Ascending aorta (tissue), 2 donors: ENCODE measurements at regions of chr10 and their contacts with region 1.

Region 1: GRCh38 chr10:49592726-49593563 is 17.2 kb upstream of the SLC18A3 start:
- DNase-seq: peak in 1 of 2 donors; percentile 63
- H3K4me3 ChIP-seq: no peak overlapping the region
- H3K27ac ChIP-seq: no peak overlapping the region
- H3K4me1 ChIP-seq: no peaks in the 10 kb centered on the region
- H3K27me3 ChIP-seq: no peaks in the 10 kb centered on the region
- CTCF ChIP-seq: peak; percentile 27 to 79 (median 69)

Region 2: GRCh38 chr10:49538381-49539319 is 54.3 kb before region 1 on chr10 and contains the start of gene ERCC6:
- intact Hi-C with region 1: loop called (anchors 5 kb)
- DNase-seq: peak; percentile 92 to 99
- H3K4me3 ChIP-seq: peak within 1 kb of the TSS; percentile 74 to 86
- H3K27ac ChIP-seq: peak within 1 kb of the TSS; percentile 87 to 94
- H3K4me1 ChIP-seq: peaks cover 11 to 35% of the 10 kb centered on the region in 2 donors
- H3K27me3 ChIP-seq: no peaks in the 10 kb centered on the region
- CTCF ChIP-seq: peak in 2 of 3 experiments; percentile 12 to 13
- total RNA-seq, gene ERCC6: 16.2 TPM

Region 3: DNA sequence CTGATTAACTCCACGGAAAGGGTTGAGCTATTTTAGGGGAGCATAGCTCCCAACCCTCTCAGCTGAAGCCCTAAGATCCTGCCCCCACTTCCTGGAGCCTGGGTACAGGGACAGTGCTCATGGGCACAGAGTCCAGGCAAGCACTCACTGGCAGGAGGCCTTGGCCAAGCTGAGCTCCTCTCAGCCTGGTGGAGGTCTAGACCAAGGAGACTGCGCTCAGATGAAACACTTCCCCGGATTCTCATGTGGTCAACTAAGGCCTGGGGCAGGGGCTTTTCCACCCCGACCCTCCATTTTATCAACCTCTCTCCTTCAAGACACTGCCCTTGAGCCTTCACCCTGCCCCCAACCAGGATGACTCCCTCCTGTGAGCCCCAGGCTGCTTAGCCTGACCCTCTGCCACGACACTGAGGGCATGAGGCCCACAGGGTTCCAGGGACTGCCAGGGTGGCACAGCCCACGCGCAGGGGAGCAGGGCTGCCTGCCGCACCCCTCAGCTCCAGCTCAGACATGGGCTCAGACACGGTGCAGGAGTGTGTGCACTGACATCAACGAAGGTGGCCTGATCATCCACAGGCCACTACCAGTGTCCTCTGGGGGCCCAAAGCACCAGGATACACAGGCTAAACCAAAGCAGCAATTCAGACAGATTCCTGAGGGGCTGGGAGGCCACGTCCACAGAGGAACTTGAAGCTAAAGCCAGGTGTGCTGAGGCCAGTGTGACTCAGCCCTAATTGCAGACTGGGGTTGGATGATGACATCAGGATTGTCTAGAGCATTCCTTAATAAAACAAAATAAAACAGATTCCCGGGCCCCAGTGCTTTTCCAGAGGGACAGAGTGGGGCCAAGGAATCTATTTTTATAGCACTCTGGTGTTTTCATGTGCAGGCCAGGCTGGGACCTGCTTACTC is 39.7 kb after region 1 on chr10:
- intact Hi-C with region 1: no loop called
- DNase-seq: peak in 1 of 2 donors; percentile 42
- H3K4me3 ChIP-seq: no peak overlapping the region
- H3K27ac ChIP-seq: no peak overlapping the region
- H3K4me1 ChIP-seq: no peaks in the 10 kb centered on the region
- H3K27me3 ChIP-seq: no peaks in the 10 kb centered on the region
- CTCF ChIP-seq: no peak

Region 4: DNA sequence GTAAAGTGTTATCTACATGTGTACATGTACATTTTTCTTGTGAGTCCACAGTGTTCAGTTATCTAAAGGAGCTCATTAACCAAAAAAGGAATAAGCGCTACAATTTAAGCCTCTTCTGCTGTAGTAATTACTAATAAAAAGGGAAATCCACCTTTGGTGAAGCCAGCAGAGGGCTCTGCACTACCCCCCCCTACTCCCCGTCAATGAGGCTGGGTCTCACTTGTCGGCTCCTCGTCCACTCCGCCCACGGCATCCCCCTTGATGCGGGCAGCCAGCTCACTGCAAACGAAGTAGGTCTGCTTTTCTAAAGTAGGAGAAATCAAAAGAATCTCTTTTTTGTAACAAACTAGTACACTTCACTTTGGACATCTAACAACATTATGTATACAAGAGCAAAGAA is 470.2 kb after region 1 on chr10:
- intact Hi-C with region 1: loop called (anchors 10 kb)
- DNase-seq: no peak
- H3K4me3 ChIP-seq: no peak overlapping the region
- H3K27ac ChIP-seq: no peak overlapping the region
- H3K4me1 ChIP-seq: peaks cover 0 to 4% of the 10 kb centered on the region in 2 donors
- H3K27me3 ChIP-seq: no peaks in the 10 kb centered on the region
- CTCF ChIP-seq: no peak